HepG2 (cell line): ENCODE measurements at regions of chr3 and their contacts with region 1.

Region 1: GRCh38 chr3:149480325-149481017 is 6.0 kb downstream of the TM4SF4 start:
- DNase-seq: peak; percentile 85
- ATAC-seq: peak; percentile 98
- H3K4me3 ChIP-seq: no peak overlapping the region
- H3K27ac ChIP-seq: peak overlapping the region; percentile 48
- H3K4me1 ChIP-seq: peaks cover 22% of the 10 kb centered on the region
- H3K27me3 ChIP-seq: no peaks in the 10 kb centered on the region
- CTCF ChIP-seq: peak; percentile 95
- EP300 ChIP-seq: peak in 1 of 2 experiments; percentile 53; a peak in 1 of 4 replicates
- POLR2A ChIP-seq: no peak
- RAD21 ChIP-seq: peak; percentile 95

Region 2: DNA sequence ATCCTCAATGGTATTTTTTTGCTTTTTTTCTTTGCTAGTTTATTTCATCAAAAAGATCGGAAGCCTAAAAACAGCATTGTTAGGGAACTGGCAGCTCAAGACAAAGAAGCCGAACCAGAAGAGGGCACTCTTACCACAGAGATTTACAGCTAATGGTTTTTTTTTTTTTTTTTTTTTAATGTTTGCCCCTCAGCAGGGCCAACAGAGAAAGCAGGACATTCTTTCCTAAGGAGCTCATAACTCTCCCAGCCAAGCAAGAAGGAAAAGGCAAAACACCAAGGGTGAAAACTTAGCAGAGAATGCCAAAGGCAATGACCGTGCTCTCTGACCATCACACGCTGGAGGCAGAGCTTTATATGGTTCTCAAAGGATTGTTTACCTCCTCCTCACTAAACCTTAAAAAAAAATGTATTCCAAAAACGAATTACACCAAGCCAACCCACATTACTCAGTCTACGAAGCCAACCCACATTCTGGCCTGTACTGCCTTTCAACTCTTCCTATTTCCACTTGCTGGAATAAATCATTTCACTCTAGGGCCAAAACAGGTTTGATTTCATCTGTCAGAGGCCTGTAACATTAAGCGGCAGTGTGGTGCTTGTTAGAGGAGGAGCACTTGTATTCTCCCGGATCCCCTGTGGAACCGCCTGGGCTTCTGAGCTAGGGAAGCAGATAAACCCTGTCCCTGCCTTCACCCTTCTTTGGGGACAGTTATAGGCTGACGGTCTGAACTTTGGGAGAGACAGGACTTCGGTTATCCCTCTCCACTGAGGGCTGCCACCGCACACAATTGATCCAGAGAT is 524.7 kb before region 1 on chr3:
- CTCF ChIA-PET with region 1: interaction called, 3 read pairs
- POLR2A ChIA-PET with region 1: no interaction called
- in situ Hi-C with region 1: loop called (anchors 10 kb)
- intact Hi-C with region 1: loop called (anchors 10 kb)
- DNase-seq: peak; percentile 47
- ATAC-seq: peak; percentile 65
- H3K4me3 ChIP-seq: peak overlapping the region; percentile 2 to 57 (median 11); a peak in 3 of 6 replicates
- H3K27ac ChIP-seq: no peak overlapping the region
- H3K4me1 ChIP-seq: peaks cover 43% of the 10 kb centered on the region
- H3K27me3 ChIP-seq: peaks cover 0 to 3% of the 10 kb centered on the region in 2 experiments; a peak in 1 of 5 replicates
- CTCF ChIP-seq: peak; percentile 65
- EP300 ChIP-seq: no peak
- POLR2A ChIP-seq: no peak
- RAD21 ChIP-seq: no peak

Region 3: GRCh38 chr3:149129326-149130205 is 350.9 kb before region 1 on chr3 and contains the start of gene HPS3:
- CTCF ChIA-PET with region 1: no interaction called
- POLR2A ChIA-PET with region 1: no interaction called
- in situ Hi-C with region 1: loop called (anchors 10 kb)
- intact Hi-C with region 1: no loop called
- DNase-seq: peak; percentile 79
- ATAC-seq: peak; percentile 96
- H3K4me3 ChIP-seq: peak within 1 kb of the TSS; percentile 78 to 95 (median 92)
- H3K27ac ChIP-seq: peak within 1 kb of the TSS; percentile 74
- H3K4me1 ChIP-seq: peaks cover 47% of the 10 kb centered on the region
- H3K27me3 ChIP-seq: no peaks in the 10 kb centered on the region; a peak in 1 of 5 replicates
- CTCF ChIP-seq: peak; percentile 16; the same call in 1 of the 2 replicates
- EP300 ChIP-seq: 0 out of 4 replicates have a peak, but pooled peaks of 1 of the 2 experiments have one; percentile 6
- POLR2A ChIP-seq: peak; percentile 90 to 92
- RAD21 ChIP-seq: peak; percentile 38; the same call in 1 of the 2 replicates
- total RNA-seq, gene HPS3: 18.9 and 23.6 TPM in 2 replicates

Region 4: GRCh38 chr3:149339931-149340309 is 140.6 kb before region 1 on chr3:
- CTCF ChIA-PET with region 1: no interaction called
- POLR2A ChIA-PET with region 1: no interaction called
- in situ Hi-C with region 1: no loop called
- intact Hi-C with region 1: no loop called
- DNase-seq: peak; percentile 77
- ATAC-seq: peak; percentile 93
- H3K4me3 ChIP-seq: peak overlapping the region in 1 of 3 experiments; percentile 23; a peak in 1 of 6 replicates
- H3K27ac ChIP-seq: peak overlapping the region; percentile 39
- H3K4me1 ChIP-seq: peaks cover 45% of the 10 kb centered on the region
- H3K27me3 ChIP-seq: no peaks in the 10 kb centered on the region
- CTCF ChIP-seq: no peak
- EP300 ChIP-seq: peak in 1 of 2 experiments; percentile 65; a peak in 2 of 4 replicates
- POLR2A ChIP-seq: no peak
- RAD21 ChIP-seq: no peak

Region 5: DNA sequence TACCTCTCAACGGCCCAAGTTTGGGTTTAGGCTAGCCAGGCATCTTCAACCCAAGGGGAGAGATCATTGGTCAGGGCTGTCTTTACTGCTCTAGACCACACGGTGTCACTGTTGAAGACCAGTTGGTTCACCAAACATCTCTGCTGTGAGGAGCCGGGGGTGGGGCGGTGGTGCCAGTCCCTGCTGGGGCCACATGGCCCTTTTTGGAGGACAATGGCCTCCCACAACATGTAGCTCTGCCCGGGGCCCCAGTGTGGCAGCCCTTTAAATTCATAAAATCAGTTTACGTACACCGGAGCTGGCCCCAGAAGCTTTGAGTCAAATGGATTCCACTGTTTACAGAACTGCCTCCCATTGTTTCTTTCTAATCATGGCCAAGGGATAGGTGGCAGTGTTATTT is 127.9 kb before region 1 on chr3:
- CTCF ChIA-PET with region 1: interaction called, 26 read pairs
- POLR2A ChIA-PET with region 1: interaction called, 6 read pairs
- in situ Hi-C with region 1: loop called (anchors 5 kb)
- intact Hi-C with region 1: loop called (anchors 1 kb)
- DNase-seq: peak; percentile 67
- ATAC-seq: peak; percentile 60
- H3K4me3 ChIP-seq: no peak overlapping the region
- H3K27ac ChIP-seq: peak overlapping the region; percentile 99
- H3K4me1 ChIP-seq: peaks cover 60% of the 10 kb centered on the region
- H3K27me3 ChIP-seq: no peaks in the 10 kb centered on the region
- CTCF ChIP-seq: peak; percentile 94
- EP300 ChIP-seq: no peak; a peak in 1 of 4 replicates
- POLR2A ChIP-seq: no peak
- RAD21 ChIP-seq: peak; percentile 92

Region 6: DNA sequence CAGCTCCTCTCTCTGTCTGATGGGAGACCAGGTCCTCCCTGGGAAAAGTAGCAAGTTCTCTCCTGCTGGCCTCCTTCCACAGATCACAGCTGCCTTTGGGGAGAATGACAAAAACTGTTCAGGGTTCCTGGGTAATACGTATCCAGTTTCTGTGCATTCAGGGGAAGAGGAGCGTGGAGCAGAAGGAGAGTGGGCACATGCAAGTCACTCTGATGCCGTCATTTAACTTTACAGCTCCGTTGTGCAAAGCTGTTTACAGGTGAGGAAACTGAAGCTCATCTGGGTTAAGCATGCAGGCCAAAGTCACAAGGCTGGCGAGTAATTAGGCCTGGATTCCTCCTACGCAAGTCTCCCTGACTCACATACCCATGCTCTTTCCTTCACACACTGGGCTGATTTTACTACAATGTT is 95.6 kb before region 1 on chr3:
- CTCF ChIA-PET with region 1: no interaction called
- POLR2A ChIA-PET with region 1: interaction called, 24 read pairs
- in situ Hi-C with region 1: no loop called
- intact Hi-C with region 1: no loop called
- DNase-seq: peak; percentile 78
- ATAC-seq: peak; percentile 23
- H3K4me3 ChIP-seq: peak overlapping the region; percentile 42 to 69 (median 66)
- H3K27ac ChIP-seq: peak overlapping the region; percentile 100
- H3K4me1 ChIP-seq: peaks cover 84% of the 10 kb centered on the region
- H3K27me3 ChIP-seq: no peaks in the 10 kb centered on the region; a peak in 1 of 5 replicates
- CTCF ChIP-seq: no peak
- EP300 ChIP-seq: peak in 1 of 2 experiments; percentile 39; a peak in 1 of 4 replicates
- POLR2A ChIP-seq: peak; percentile 63 to 71
- RAD21 ChIP-seq: no peak

Region 7: DNA sequence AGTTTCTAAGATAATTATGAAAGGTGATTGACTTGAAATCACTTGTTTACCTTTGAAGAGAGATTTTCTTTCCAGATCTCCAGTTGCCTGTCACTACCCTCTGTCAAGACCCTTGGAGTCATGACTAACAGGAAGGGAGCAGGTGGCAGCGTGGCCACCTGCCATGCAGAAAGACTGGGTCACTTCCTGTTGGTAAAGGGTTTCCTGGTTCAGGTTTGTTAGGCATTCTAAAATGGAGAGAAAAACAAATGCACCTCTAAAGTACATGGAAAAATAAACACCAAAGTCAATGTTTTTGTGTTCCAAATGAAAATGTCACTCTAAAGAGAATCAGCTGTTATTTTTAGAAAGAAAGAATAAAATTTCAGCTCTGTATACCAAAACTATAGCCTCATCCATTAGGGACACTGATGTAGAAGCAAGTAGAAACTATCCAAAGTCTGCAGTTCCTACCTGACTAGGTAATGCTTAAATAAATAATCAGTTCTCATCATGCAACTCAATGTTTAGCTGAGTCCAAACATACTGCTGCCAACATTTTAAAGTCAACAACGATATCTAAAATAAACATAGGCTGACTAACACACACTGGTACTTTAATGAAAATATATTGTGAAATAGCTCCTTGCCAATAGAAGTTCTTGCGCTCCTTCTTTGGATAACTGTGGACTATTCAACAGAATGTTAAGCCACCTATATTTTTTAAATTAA is 79.1 kb before region 1 on chr3:
- CTCF ChIA-PET with region 1: interaction called, 4 read pairs
- POLR2A ChIA-PET with region 1: interaction called, 13 read pairs
- in situ Hi-C with region 1: loop called (anchors 5 kb)
- intact Hi-C with region 1: no loop called
- DNase-seq: peak; percentile 97
- ATAC-seq: peak; percentile 98
- H3K4me3 ChIP-seq: peak overlapping the region in 2 of 3 experiments; percentile 4 to 36; a peak in 1 of 6 replicates
- H3K27ac ChIP-seq: peak overlapping the region; percentile 94
- H3K4me1 ChIP-seq: peaks cover 84% of the 10 kb centered on the region
- H3K27me3 ChIP-seq: no peaks in the 10 kb centered on the region
- CTCF ChIP-seq: no peak
- EP300 ChIP-seq: peak; percentile 91 to 99
- POLR2A ChIP-seq: no peak
- RAD21 ChIP-seq: no peak

Region 8: GRCh38 chr3:149494022-149494758 is 13.7 kb after region 1 on chr3:
- CTCF ChIA-PET with region 1: no interaction called
- POLR2A ChIA-PET with region 1: no interaction called
- in situ Hi-C with region 1: no loop called
- intact Hi-C with region 1: no loop called
- DNase-seq: peak; percentile 64
- ATAC-seq: peak; percentile 88
- H3K4me3 ChIP-seq: peak overlapping the region; percentile 46 to 65 (median 62)
- H3K27ac ChIP-seq: peak overlapping the region; percentile 66
- H3K4me1 ChIP-seq: peaks cover 47% of the 10 kb centered on the region
- H3K27me3 ChIP-seq: no peaks in the 10 kb centered on the region
- CTCF ChIP-seq: peak; percentile 91
- EP300 ChIP-seq: no peak
- POLR2A ChIP-seq: no peak; a peak in 1 of 4 replicates
- RAD21 ChIP-seq: peak; percentile 70